Prostate gland (tissue), 2 donors: ENCODE measurements at regions of chr19 and their contacts with region 1.

Region 1: DNA sequence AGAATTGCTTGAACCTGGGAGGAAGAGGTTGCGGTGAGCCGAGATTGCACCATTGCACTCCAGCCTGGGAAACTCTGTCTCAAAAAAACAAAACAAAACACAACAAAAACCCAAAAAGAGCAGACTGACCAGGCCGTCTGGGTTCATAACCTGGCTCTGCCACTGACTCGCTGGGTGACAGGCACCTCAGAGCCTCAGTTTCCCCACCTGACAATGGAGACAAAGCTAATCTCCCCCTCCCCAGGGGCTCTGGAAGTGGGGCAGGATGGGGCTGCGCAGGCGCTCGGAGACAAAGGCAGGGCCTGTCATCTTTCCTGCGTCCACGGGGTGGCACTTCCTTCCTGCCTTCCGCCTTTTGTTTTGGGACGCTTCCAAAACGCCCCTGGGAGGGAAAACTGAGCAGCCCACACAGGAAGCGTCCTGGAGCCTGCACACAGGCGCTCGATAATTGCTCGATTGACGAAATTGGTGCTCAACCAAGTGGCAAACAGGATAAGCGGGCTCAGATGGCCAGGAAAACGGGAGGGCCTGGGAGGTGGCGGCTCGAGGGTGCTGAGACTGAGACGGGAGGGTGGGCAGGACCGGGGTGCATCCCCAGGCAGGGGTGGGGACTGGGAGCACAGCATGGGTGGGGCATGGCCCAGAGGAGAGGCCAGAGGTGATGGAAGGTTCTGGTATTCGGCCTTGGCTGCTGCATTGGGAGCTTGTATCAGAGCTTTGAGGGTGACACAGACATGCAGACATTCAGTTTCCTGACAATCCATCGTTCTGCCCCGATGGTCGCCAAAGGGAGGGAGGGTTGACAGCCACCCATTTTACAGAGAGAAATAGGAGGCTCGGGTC is 17.8 kb downstream of the SPC24 start:
- DNase-seq: peak; percentile 53
- H3K4me3 ChIP-seq: peak overlapping the region in 1 of 2 donors; percentile 18
- H3K27ac ChIP-seq: peak overlapping the region; percentile 71 to 74
- H3K4me1 ChIP-seq: peaks cover 7% of the 10 kb centered on the region
- H3K27me3 ChIP-seq: no peaks in the 10 kb centered on the region
- CTCF ChIP-seq: peak; percentile 63 to 94 (median 88)
- POLR2A ChIP-seq: no peak

Region 2: DNA sequence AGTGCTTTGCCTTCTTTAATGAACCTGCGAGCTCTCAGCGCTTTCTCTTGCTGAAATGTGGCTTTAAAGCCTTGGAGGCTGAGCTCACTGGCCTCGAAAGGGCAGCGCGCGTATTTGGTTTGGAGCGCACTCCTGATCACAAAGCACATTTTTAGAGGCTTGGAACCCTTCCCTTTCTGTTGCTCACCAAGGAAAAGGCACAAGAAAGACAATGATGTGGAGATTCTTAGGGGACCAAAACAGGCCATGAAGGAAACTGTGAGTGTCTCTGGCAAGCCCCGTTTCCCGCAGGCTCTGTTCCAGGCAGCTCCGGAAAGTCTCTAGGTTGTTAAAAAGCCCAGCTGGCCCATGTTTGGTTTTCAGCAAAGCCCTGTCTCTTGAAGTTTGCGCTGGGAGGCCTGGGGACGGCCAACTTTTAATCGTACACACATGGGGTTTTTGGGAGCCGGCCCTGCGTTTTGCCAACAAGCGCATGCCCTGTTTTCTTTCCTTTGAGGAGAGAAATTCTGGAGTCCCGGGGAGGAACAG is 27.2 kb after region 1 on chr19:
- intact Hi-C with region 1: loop called (anchors 2 kb)
- DNase-seq: peak; percentile 19
- H3K4me3 ChIP-seq: no peak overlapping the region
- H3K27ac ChIP-seq: peak overlapping the region; percentile 72 to 78
- H3K4me1 ChIP-seq: no peaks in the 10 kb centered on the region
- H3K27me3 ChIP-seq: no peaks in the 10 kb centered on the region
- CTCF ChIP-seq: no peak
- POLR2A ChIP-seq: no peak

Region 3: DNA sequence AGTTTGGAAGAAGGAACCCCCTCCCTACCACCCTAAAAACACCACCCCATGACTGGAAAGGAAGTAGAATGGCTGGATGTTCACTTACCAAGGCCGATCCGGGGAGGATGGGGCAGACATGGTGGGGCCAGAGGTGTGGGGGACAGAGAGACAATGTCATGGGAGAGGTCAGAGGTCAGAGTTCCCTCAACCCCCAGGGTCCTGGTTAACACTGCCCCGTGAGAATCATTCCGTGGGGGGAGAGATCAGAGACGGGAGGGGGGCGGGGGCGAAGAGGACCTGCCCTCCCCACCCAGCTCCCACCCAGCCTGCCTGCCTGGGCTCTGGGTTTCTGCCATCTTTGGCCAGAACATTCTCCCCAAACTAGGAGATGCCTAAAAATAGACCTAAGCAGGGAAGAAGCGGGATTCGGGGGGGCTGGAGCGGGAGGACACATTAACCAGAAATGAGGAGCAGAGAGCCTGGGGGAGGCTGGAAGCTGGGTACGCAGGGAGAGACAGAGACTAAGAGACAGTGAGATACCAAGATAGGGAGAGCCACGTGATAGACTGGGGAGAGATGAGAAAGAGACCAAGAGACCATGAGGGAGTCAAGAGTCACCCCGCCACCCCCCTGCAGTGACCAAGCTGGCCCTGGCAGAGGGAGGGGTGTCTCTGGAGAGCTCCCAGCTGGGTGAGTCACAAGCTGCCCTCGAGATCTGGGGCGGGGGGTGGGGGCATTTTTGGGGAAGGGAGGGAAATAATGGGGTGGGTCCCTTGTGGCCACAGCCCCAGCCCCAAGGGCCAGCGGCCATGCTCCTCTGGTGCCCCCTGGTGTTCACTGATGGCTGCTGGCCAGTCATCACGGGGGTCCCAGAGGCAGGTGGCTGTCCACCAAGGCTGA is 65.7 kb after region 1 on chr19:
- intact Hi-C with region 1: loop called (anchors 1 kb)
- DNase-seq: peak; percentile 34
- H3K4me3 ChIP-seq: no peak overlapping the region
- H3K27ac ChIP-seq: peak overlapping the region; percentile 74 to 85
- H3K4me1 ChIP-seq: no peaks in the 10 kb centered on the region
- H3K27me3 ChIP-seq: no peaks in the 10 kb centered on the region
- CTCF ChIP-seq: peak; percentile 79 to 94 (median 82)
- POLR2A ChIP-seq: no peak